HEK293T (cell line): ENCODE measurements at regions of chr1 and their contacts with region 1.

Region 1: GRCh38 chr1:117367047-117368018 is at the start of gene MAN1A2:
- DNase-seq: peak; percentile 71

Region 2: GRCh38 chr1:117339866-117340700 is 27.2 kb before region 1 on chr1:
- CTCF ChIA-PET with region 1: no interaction called
- POLR2A ChIA-PET with region 1: interaction called, 11 read pairs
- DNase-seq: peak; percentile 78

Region 3: GRCh38 chr1:117398957-117399356 is 31.6 kb after region 1 on chr1:
- CTCF ChIA-PET with region 1: no interaction called
- POLR2A ChIA-PET with region 1: no interaction called
- DNase-seq: no peak